ENCODE measurements at regions of chr6 and their contacts with region 1.

Region 1: GRCh38 chr6:122730775-122731386 is 48.6 kb upstream of the FABP7 start:
- DNase-seq: peak; percentile 20
- H3K27ac ChIP-seq: no peak overlapping the region
- CTCF ChIP-seq: peak; percentile 87

Region 2: GRCh38 chr6:122491919-122492555 is 238.8 kb before region 1 on chr6:
- CTCF ChIA-PET with region 1: interaction called, 11 read pairs
- POLR2A ChIA-PET with region 1: no interaction called
- DNase-seq: peak; percentile 54
- H3K27ac ChIP-seq: no peak overlapping the region
- CTCF ChIP-seq: peak; percentile 79

Region 3: GRCh38 chr6:122580745-122581144 is 150.1 kb before region 1 on chr6:
- CTCF ChIA-PET with region 1: no interaction called
- POLR2A ChIA-PET with region 1: no interaction called
- DNase-seq: peak; percentile 39
- H3K27ac ChIP-seq: no peak overlapping the region
- CTCF ChIP-seq: no peak

Region 4: DNA sequence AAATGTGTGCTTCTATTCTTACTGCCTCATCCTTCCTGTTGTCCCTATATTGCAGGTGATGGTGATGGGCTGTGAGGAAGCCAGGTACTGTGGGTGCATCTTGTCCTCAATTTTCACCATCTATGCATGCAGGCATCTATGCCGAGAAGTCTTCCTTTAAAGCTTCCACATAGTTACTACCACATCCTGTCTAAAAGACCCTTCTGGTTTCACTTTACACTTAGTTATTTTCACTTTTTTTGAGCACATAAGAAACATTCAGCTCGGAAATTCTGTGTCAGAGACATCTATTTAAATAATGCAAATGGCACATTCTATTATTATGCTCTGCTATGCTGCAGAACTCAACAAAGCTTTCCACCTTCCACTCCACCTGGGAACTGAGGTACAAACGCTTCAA is 20.4 kb after region 1 on chr6:
- CTCF ChIA-PET with region 1: no interaction called
- POLR2A ChIA-PET with region 1: no interaction called
- DNase-seq: no peak
- H3K27ac ChIP-seq: no peak overlapping the region
- CTCF ChIP-seq: no peak

Region 5: DNA sequence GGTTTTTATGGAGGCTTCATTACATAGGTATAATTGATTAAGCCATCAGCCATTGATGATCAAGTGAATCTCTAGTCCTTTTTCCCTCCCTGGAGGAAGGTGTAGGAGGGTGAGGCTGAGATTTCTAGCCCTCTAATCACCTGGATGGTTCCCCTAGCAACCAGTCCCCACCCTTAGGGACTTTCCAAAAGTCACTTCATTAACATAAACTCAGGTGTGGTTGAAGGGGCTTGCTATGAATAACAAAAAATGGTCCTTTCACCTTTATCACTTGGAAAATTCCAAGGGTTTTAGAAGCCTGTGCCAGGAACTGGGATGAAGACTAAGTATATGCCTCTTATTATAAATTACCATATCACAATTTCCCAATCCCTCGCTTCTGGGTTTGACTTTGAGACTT is 98.6 kb after region 1 on chr6:
- CTCF ChIA-PET with region 1: no interaction called
- POLR2A ChIA-PET with region 1: no interaction called
- DNase-seq: no peak
- H3K27ac ChIP-seq: no peak overlapping the region
- CTCF ChIP-seq: no peak

Region 6: GRCh38 chr6:122839477-122839876 is 108.6 kb after region 1 on chr6:
- CTCF ChIA-PET with region 1: interaction called, 38 read pairs
- POLR2A ChIA-PET with region 1: no interaction called
- DNase-seq: peak; percentile 69
- H3K27ac ChIP-seq: no peak overlapping the region
- CTCF ChIP-seq: peak; percentile 46